GM23248 (cell line): ENCODE measurements at regions of chr11 and their contacts with region 1.

Region 1: DNA sequence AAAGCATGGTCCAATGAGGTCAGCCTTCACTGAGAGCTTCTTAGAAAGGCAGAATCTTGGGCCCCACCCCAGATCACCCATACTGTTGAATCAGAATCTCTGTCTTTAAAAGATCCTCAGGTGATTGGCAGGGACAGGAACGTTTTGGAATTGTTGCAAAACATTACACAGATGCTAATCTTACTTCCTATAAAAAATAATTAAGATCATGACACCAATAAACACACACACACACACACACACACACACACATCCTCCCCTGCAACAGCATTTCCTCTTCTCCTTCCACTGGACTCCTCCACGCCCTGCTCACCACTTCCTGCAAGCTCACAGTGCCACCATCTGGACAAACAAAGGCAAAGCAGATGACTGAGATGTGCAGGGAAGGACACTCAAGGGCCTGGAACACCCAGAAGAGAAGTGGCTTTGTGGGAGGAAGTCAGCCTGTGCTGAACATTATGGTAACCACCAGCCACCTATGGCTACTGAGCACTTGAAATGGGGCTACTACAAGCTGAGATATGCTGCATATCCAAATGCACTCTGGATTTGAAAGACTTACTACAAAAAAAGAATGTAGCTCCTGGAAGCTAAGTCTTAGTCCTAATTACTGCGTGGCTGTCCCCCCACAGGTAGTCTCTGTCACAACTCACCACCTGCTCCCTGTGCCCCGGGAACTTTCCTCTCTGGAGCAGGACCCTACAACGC is 65.6 kb downstream of the BTG4 start:
- DNase-seq: peak; percentile 94
- H3K4me3 ChIP-seq: no peak overlapping the region
- H3K27ac ChIP-seq: no peak overlapping the region
- H3K4me1 ChIP-seq: peaks cover under 1% of the 10 kb centered on the region; the same call in 1 of the 2 replicates
- H3K27me3 ChIP-seq: no peaks in the 10 kb centered on the region

Region 2: GRCh38 chr11:110463153-110463552 is 983.4 kb before region 1 on chr11:
- in situ Hi-C with region 1: loop called (anchors 25 kb)
- DNase-seq: peak; percentile 63
- H3K4me3 ChIP-seq: no peak overlapping the region
- H3K27ac ChIP-seq: no peak overlapping the region
- H3K4me1 ChIP-seq: 0 out of 2 replicates have a peak, but pooled peaks cover 4% of the 10 kb centered on the region
- H3K27me3 ChIP-seq: no peaks in the 10 kb centered on the region

Region 3: DNA sequence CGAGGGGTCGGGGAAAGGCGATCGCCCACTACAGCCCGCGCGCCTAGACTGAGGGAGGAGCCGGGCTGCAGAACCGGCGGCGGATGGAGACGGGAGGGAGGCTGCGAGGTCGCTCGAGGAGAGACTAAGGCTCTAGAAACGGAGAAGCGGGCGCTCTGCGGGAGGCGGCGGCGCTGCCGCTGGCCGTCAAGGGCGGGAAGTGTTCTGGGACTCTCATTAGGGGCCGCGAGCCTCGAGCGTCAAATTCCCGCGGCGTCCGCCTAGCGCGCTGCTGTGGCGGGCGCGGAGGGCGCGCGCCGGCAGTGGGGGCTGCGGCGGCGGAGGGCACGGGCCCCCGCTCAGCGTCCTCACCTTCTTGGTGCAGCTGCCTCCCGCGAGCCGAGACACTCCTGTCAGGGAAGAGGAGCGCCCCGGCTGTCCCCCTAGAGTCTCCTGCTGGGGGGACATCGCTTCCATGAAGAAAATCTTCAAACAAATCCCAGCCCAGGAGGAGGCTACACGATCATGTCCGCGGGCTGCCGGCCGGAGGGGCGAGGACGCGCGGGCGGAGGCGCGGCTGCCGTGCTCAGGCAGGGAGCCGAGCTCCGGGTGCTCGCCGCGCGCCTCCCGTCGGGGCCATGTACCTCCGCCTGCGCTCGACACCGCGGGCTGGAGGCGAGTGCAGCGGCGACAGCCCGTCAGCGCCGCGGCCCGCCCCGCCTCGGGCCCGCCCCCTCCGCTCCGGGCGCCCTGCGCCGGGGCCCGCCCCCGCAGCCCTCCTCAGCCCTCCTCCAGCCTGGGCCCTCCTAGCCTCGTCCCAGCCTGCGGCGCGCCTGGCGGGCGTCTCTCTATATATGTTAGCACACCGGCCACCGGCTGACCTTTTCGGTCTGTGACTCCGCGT is 734.5 kb before region 1 on chr11 and contains the start of gene ARHGAP20:
- in situ Hi-C with region 1: loop called (anchors 25 kb)
- DNase-seq: peak; percentile 87
- H3K4me3 ChIP-seq: peak within 1 kb of the TSS; percentile 78
- H3K27ac ChIP-seq: no peak within 1 kb of the TSS
- H3K4me1 ChIP-seq: peaks cover 22% of the 10 kb centered on the region
- H3K27me3 ChIP-seq: no peaks in the 10 kb centered on the region
- total RNA-seq, gene ARHGAP20: 0.76 and 0.97 TPM in 2 replicates

Region 4: GRCh38 chr11:111399187-111400031 is 47.1 kb before region 1 on chr11:
- in situ Hi-C with region 1: no loop called
- DNase-seq: no peak
- H3K4me3 ChIP-seq: no peak overlapping the region
- H3K27ac ChIP-seq: no peak overlapping the region
- H3K4me1 ChIP-seq: no peaks in the 10 kb centered on the region
- H3K27me3 ChIP-seq: peaks cover 12% of the 10 kb centered on the region